ENCODE measurements at regions of chr14 and their contacts with region 1.

Region 1: GRCh38 chr14:24418492-24418873 is 11.0 kb downstream of the CBLN3 start:
- DNase-seq: peak; percentile 37 to 60
- H3K4me3 ChIP-seq: no peak overlapping the region
- H3K27ac ChIP-seq: no peak overlapping the region
- H3K4me1 ChIP-seq: no peaks in the 10 kb centered on the region; the same call in 1 of the 2 replicates
- H3K27me3 ChIP-seq: no peaks in the 10 kb centered on the region
- CTCF ChIP-seq: no peak

Region 2: DNA sequence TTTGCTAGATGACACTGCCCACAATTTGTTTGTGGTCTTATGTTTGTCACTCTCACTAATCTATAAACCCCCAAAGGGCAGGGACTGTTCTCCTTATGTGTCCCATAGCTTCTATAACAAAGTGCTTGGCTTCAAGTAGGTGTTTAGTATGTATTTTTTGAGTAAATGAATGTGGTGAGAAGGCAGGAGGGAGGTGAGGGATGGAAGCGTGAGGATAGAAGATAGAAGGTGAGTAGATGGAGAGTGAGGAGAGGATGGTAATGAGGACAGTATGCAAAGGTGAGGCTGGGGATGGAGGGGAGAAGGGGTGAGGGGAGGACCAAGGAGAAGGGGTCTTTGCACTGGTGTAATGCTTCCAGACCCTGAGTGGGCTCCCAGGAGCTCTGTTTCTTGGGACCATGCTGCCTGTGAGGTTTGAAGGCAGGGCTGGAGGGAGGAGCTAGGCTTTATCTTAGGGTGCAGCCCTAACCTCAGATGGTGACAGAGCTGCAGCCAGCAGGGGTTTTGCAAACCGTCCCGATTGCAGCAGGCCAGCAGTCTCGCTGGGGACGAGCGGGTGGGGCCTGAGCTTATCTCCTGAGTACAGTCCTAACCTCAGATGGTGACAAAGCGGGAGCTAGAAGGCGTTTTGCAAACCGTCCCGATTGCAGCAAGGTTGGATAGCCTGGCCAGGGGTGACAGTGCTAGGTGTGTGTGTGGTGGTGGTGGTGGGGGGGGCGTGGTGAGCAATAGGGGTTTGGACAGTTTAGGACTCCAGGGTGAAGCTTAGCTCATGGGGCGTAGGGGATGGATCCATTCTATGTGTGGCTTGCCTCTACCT is 1305.9 kb before region 1 on chr14:
- CTCF ChIA-PET with region 1: interaction called, 18 read pairs
- POLR2A ChIA-PET with region 1: no interaction called
- intact Hi-C with region 1: no loop called
- DNase-seq: peak in 1 of 2 experiments; percentile 62
- H3K4me3 ChIP-seq: no peak overlapping the region
- H3K27ac ChIP-seq: no peak overlapping the region
- H3K4me1 ChIP-seq: peaks cover 41% of the 10 kb centered on the region
- H3K27me3 ChIP-seq: no peaks in the 10 kb centered on the region
- CTCF ChIP-seq: no peak

Region 3: GRCh38 chr14:24372701-24373416 is 45.6 kb before region 1 on chr14:
- CTCF ChIA-PET with region 1: no interaction called
- POLR2A ChIA-PET with region 1: no interaction called
- intact Hi-C with region 1: no loop called
- DNase-seq: no peak
- H3K4me3 ChIP-seq: no peak overlapping the region
- H3K27ac ChIP-seq: no peak overlapping the region
- H3K4me1 ChIP-seq: no peaks in the 10 kb centered on the region; the same call in 1 of the 2 replicates
- H3K27me3 ChIP-seq: no peaks in the 10 kb centered on the region
- CTCF ChIP-seq: no peak

Region 4: GRCh38 chr14:24943024-24943423 is 524.5 kb after region 1 on chr14:
- CTCF ChIA-PET with region 1: no interaction called
- POLR2A ChIA-PET with region 1: no interaction called
- intact Hi-C with region 1: no loop called
- DNase-seq: peak in 1 of 2 experiments; percentile 44
- H3K4me3 ChIP-seq: no peak overlapping the region
- H3K27ac ChIP-seq: no peak overlapping the region
- H3K4me1 ChIP-seq: no peaks in the 10 kb centered on the region
- H3K27me3 ChIP-seq: no peaks in the 10 kb centered on the region
- CTCF ChIP-seq: no peak